ENCODE measurements at regions of chr1 and their contacts with region 1.

Region 1: GRCh38 chr1:16366722-16367257 is at the start of gene SZRD1:
- DNase-seq: peak; percentile 89 to 99 (median 97)
- ATAC-seq: peak; percentile 89 to 91 (median 91)
- H3K4me3 ChIP-seq: peak within 1 kb of the TSS; percentile 99
- H3K4me3 Mint-ChIP-seq: peak within 1 kb of the TSS; percentile 96 to 97 (median 96)
- H3K27ac ChIP-seq: peak within 1 kb of the TSS; percentile 99
- H3K27ac Mint-ChIP-seq: peak within 1 kb of the TSS; percentile 97
- H3K4me1 ChIP-seq: peaks cover 14 to 28% of the 10 kb centered on the region in 2 experiments
- H3K4me1 Mint-ChIP-seq: peaks cover 24 to 39% (median 37%) of the 10 kb centered on the region in 3 donors
- H3K27me3 ChIP-seq: no peaks in the 10 kb centered on the region
- H3K27me3 Mint-ChIP-seq: no peaks in the 10 kb centered on the region
- total RNA-seq, gene SZRD1: 87.2 to 122 (median 106) TPM

Region 2: DNA sequence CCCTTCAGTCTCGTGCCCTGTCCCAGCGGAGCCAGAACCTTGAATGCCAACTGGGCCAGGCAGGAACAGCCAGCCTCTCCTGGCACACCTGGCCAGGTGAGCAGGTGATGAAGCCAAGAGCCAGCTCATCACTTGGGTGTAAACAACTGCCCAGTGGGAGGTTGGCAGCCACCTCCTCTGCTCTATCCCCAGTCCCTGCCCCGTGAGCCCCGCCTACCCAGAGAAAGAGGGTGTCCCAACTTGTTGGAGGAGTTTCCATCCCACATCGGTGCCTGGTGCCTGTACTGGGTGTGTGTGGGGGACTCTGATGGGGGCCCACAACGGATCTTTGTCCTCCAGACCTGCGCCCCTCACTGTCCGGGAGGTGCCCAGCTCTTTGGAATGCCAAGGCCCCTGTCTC is 275.5 kb before region 1 on chr1:
- CTCF ChIA-PET with region 1: no interaction called
- POLR2A ChIA-PET with region 1: no interaction called
- DNase-seq: no peak
- ATAC-seq: no peak
- H3K4me3 ChIP-seq: no peak overlapping the region
- H3K4me3 Mint-ChIP-seq: no peak overlapping the region
- H3K27ac ChIP-seq: no peak overlapping the region
- H3K27ac Mint-ChIP-seq: no peak overlapping the region
- H3K4me1 ChIP-seq: no peaks in the 10 kb centered on the region
- H3K4me1 Mint-ChIP-seq: no peaks in the 10 kb centered on the region
- H3K27me3 ChIP-seq: peaks cover 0 to 29% of the 10 kb centered on the region in 2 experiments
- H3K27me3 Mint-ChIP-seq: peaks cover 0 to 3% of the 10 kb centered on the region in 2 donors

Region 3: GRCh38 chr1:16111771-16112595 is 254.8 kb before region 1 on chr1:
- CTCF ChIA-PET with region 1: no interaction called
- POLR2A ChIA-PET with region 1: no interaction called
- DNase-seq: no peak
- ATAC-seq: no peak
- H3K4me3 ChIP-seq: no peak overlapping the region
- H3K4me3 Mint-ChIP-seq: no peak overlapping the region
- H3K27ac ChIP-seq: no peak overlapping the region
- H3K27ac Mint-ChIP-seq: no peak overlapping the region
- H3K4me1 ChIP-seq: no peaks in the 10 kb centered on the region
- H3K4me1 Mint-ChIP-seq: no peaks in the 10 kb centered on the region
- H3K27me3 ChIP-seq: peaks cover 0 to 60% of the 10 kb centered on the region in 2 experiments
- H3K27me3 Mint-ChIP-seq: peaks cover 11 to 20% of the 10 kb centered on the region in 2 donors

Region 4: DNA sequence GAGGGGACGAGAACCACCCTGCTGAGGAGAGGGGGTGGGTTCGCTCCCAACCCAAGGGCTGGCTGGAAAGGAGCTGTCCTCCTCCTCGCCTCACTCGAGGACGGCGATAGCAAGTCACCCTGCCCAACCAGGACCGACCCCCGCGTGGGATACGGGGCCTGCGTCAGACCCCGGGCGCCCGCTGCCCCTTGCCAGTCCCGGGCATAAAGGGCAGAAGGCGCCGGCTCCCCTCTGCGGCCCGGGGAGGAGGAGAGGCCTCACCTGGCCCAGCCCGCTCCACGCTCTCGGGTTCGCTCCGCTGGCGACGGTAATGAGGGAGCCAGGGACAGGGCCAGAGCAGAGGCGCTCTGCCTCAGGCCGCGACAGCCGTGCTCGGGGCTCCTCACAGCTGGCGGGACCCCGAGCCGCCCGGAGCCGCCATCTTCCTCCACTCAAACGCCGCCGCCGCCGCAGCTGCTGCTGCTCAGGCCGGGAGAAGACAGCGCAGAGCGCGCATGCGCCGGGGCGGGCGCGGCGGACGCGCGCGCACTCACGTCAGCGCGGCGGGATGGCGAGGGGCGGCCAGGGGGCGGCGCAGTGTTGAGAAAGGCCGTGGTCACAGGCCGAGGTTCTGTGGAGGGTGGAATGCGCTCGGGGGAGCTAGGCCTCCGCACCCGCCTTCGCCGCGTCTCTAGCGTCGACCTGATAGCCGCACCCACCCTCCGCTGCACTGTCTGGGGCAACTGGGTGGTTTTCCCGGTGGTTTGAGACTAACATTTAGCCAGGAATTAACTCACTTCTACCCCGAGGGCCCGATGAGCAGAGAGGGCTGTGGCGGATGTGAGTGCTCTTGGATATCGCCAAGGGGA is 14.6 kb before region 1 on chr1 and contains the start of gene FBXO42:
- CTCF ChIA-PET with region 1: interaction called, 20 to 25 read pairs
- POLR2A ChIA-PET with region 1: interaction called in 1 of 2 experiments, 9 read pairs
- DNase-seq: peak; percentile 80 to 97 (median 89)
- ATAC-seq: peak; percentile 92 to 96 (median 94)
- H3K4me3 ChIP-seq: peak within 1 kb of the TSS; percentile 79 to 96
- H3K4me3 Mint-ChIP-seq: peak within 1 kb of the TSS; percentile 89 to 94 (median 94)
- H3K27ac ChIP-seq: peak within 1 kb of the TSS; percentile 93
- H3K27ac Mint-ChIP-seq: peak within 1 kb of the TSS; percentile 88 to 91
- H3K4me1 ChIP-seq: peaks cover 11 to 28% of the 10 kb centered on the region in 2 experiments
- H3K4me1 Mint-ChIP-seq: peaks cover 31 to 44% (median 36%) of the 10 kb centered on the region in 3 donors
- H3K27me3 ChIP-seq: no peaks in the 10 kb centered on the region
- H3K27me3 Mint-ChIP-seq: no peaks in the 10 kb centered on the region
- total RNA-seq, gene FBXO42: 20.6 to 23.4 (median 22.5) TPM

Region 5: DNA sequence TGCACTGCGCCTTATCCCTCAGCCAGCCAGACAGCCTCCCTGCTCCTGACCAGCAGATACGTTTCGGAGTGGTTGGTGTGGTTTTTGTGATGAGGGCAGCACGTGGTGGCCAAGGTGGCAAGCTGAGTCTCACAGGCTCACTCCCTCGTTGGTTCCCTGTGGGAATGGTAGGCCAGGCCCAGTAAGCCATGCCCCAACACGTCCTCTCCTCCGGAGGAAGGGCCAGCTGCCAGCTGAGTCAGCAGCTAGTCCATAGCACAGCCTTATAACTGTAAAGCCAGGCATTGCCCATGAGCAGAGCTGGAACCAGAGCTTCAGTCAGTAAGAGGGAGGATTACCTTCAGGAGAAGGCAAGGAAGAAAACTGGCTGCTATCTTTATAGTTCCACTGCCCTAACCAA is 29.8 kb after region 1 on chr1:
- CTCF ChIA-PET with region 1: no interaction called
- POLR2A ChIA-PET with region 1: no interaction called
- DNase-seq: no peak
- ATAC-seq: no peak
- H3K4me3 ChIP-seq: no peak overlapping the region
- H3K4me3 Mint-ChIP-seq: no peak overlapping the region
- H3K27ac ChIP-seq: no peak overlapping the region
- H3K27ac Mint-ChIP-seq: no peak overlapping the region
- H3K4me1 ChIP-seq: peaks cover 0 to 20% of the 10 kb centered on the region in 2 experiments
- H3K4me1 Mint-ChIP-seq: peaks cover 16 to 22% (median 21%) of the 10 kb centered on the region in 3 donors
- H3K27me3 ChIP-seq: no peaks in the 10 kb centered on the region
- H3K27me3 Mint-ChIP-seq: no peaks in the 10 kb centered on the region